SK-N-SH (cell line): ENCODE measurements at regions of chr7 and their contacts with region 1.

Region 1: GRCh38 chr7:36291387-36292316 is 98.0 kb upstream of the ANLN start:
- DNase-seq: peak; percentile 93
- H3K4me3 ChIP-seq: peak overlapping the region; percentile 18 to 37; a peak in 3 of 4 replicates
- H3K27ac ChIP-seq: peak overlapping the region in 1 of 2 experiments; percentile 1; a peak in 1 of 4 replicates
- H3K4me1 ChIP-seq: peaks cover 4 to 14% of the 10 kb centered on the region in 2 experiments; a peak in 1 of 4 replicates
- H3K27me3 ChIP-seq: no peaks in the 10 kb centered on the region
- CTCF ChIP-seq: peak; percentile 100
- EP300 ChIP-seq: no peak
- RAD21 ChIP-seq: peak; percentile 100

Region 2: GRCh38 chr7:35975851-35976454 is 315.7 kb before region 1 on chr7:
- CTCF ChIA-PET with region 1: interaction called, 12 read pairs
- POLR2A ChIA-PET with region 1: no interaction called
- DNase-seq: peak; percentile 72
- H3K4me3 ChIP-seq: no peak overlapping the region
- H3K27ac ChIP-seq: no peak overlapping the region
- H3K4me1 ChIP-seq: peaks cover 0 to 5% of the 10 kb centered on the region in 2 experiments; a peak in 1 of 4 replicates
- H3K27me3 ChIP-seq: no peaks in the 10 kb centered on the region
- CTCF ChIP-seq: peak; percentile 96
- EP300 ChIP-seq: no peak
- RAD21 ChIP-seq: peak; percentile 99

Region 3: GRCh38 chr7:35993676-35994606 is 297.7 kb before region 1 on chr7:
- CTCF ChIA-PET with region 1: interaction called, 24 read pairs
- POLR2A ChIA-PET with region 1: no interaction called
- DNase-seq: no peak
- H3K4me3 ChIP-seq: no peak overlapping the region
- H3K27ac ChIP-seq: no peak overlapping the region
- H3K4me1 ChIP-seq: no peaks in the 10 kb centered on the region
- H3K27me3 ChIP-seq: no peaks in the 10 kb centered on the region
- CTCF ChIP-seq: no peak
- EP300 ChIP-seq: no peak
- RAD21 ChIP-seq: no peak

Region 4: GRCh38 chr7:36119005-36119706 is 172.5 kb before region 1 on chr7:
- CTCF ChIA-PET with region 1: interaction called, 14 read pairs
- POLR2A ChIA-PET with region 1: no interaction called
- DNase-seq: no peak
- H3K4me3 ChIP-seq: no peak overlapping the region
- H3K27ac ChIP-seq: peak overlapping the region in 1 of 2 experiments; percentile 6; a peak in 1 of 4 replicates
- H3K4me1 ChIP-seq: peaks cover 27 to 30% of the 10 kb centered on the region in 2 experiments
- H3K27me3 ChIP-seq: no peaks in the 10 kb centered on the region
- CTCF ChIP-seq: no peak
- EP300 ChIP-seq: no peak; a peak in 1 of 4 replicates
- RAD21 ChIP-seq: no peak

Region 5: DNA sequence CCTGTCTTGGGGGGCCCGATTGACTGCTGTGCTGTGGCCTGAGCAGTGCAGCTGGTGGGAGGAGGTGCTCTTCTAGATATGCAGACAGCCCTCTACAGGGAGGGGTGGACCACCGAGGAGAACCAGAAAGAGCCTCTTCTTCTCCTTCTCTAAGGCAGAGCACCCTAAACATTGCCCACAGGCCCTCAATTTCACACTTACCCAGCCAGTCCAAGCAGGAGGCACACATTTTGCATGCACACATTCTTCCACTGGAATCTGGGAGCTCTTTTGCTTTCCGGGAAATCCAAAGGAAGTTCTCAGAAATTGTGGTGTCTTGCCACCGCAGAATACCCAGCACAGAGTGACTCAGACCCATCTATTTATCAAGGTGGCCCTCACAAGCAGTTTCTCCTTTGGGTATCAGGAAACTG is 92.8 kb before region 1 on chr7:
- CTCF ChIA-PET with region 1: interaction called, 10 read pairs
- POLR2A ChIA-PET with region 1: no interaction called
- DNase-seq: no peak
- H3K4me3 ChIP-seq: no peak overlapping the region
- H3K27ac ChIP-seq: no peak overlapping the region
- H3K4me1 ChIP-seq: peaks cover 0 to 22% of the 10 kb centered on the region in 2 experiments; a peak in 3 of 4 replicates
- H3K27me3 ChIP-seq: no peaks in the 10 kb centered on the region
- CTCF ChIP-seq: no peak
- EP300 ChIP-seq: no peak
- RAD21 ChIP-seq: no peak

Region 6: DNA sequence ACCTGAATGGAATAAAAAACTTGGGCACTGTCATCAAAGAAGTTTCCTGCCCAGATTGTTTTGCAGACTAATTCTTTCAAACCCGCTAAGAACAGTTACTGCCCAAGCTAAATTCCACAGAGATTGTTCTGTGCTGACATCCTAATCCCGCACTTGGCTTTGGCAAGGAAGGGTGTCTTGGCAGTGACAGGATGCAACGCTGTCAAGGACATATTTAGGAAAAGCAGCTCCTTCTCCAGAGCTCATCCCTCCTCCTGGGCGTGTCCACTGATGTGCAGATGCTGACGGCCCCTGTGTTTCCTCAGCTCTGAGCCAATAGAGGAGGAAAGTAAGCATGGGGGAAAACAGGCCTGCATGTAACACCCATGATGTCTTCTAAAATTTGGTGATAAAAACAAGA is 64.4 kb before region 1 on chr7:
- CTCF ChIA-PET with region 1: no interaction called
- POLR2A ChIA-PET with region 1: no interaction called
- DNase-seq: no peak
- H3K4me3 ChIP-seq: no peak overlapping the region
- H3K27ac ChIP-seq: no peak overlapping the region
- H3K4me1 ChIP-seq: peaks cover 0 to 24% of the 10 kb centered on the region in 2 experiments; a peak in 2 of 4 replicates
- H3K27me3 ChIP-seq: no peaks in the 10 kb centered on the region
- CTCF ChIP-seq: no peak
- EP300 ChIP-seq: no peak
- RAD21 ChIP-seq: no peak

Region 7: DNA sequence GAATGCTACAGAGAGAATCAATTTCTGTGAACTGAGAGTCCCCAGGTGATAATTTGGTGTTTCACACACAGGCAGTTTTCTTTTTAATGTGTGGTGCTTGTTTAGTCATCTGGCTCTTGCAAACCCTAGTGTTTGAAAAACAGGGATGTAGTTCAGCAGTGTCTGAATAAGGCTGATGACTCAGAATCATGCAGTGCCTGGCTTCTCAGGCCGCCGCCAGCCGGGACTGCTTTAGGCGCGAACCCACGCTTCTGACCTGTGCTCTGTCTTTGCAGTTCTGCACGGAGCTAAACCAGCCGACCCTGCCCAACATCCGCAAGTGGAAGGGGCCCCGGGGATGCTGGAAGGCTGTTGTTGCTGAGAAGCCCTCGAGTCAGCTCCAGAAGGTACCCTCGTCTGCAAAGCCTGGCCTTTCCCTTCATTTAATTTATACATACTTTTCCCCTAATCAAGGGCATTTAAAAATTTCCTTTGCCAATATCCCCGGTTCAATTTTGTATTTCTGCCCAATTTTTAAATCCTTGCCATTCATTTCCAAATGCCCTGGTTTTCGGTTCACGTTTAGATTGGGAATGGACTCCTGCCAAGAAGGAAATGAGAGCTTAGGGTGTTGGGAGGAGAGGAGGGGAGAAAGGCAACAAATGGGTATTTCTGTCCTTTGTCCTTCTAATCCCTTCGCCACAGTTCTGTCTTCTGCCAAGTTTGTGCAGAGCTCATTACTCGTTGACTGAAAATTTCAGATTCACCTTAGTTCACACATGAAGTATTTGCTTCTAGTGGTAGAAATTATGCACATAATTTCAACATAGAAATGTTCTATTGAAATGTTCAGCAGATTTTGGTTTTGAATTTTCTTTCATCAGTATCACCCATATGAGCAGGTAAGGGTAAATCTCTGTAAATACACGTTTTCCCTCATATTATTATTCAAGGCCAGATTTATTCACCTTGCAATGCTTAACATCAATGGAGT is 10.5 kb before region 1 on chr7:
- CTCF ChIA-PET with region 1: interaction called, 40 read pairs
- POLR2A ChIA-PET with region 1: no interaction called
- DNase-seq: peak; percentile 69
- H3K4me3 ChIP-seq: peak overlapping the region; percentile 28 to 39
- H3K27ac ChIP-seq: peak overlapping the region; percentile 63 to 74
- H3K4me1 ChIP-seq: peaks cover 32 to 54% of the 10 kb centered on the region in 2 experiments
- H3K27me3 ChIP-seq: no peaks in the 10 kb centered on the region
- CTCF ChIP-seq: no peak
- EP300 ChIP-seq: 0 out of 4 replicates have a peak, but pooled peaks of 1 of the 2 experiments have one; percentile 19
- RAD21 ChIP-seq: no peak; the same call in 1 of the 2 replicates

Region 8: GRCh38 chr7:36312344-36313334 is 21.0 kb after region 1 on chr7:
- CTCF ChIA-PET with region 1: interaction called, 216 read pairs
- POLR2A ChIA-PET with region 1: no interaction called
- DNase-seq: no peak
- H3K4me3 ChIP-seq: no peak overlapping the region
- H3K27ac ChIP-seq: no peak overlapping the region
- H3K4me1 ChIP-seq: peaks cover 0 to 10% of the 10 kb centered on the region in 2 experiments; a peak in 1 of 4 replicates
- H3K27me3 ChIP-seq: no peaks in the 10 kb centered on the region
- CTCF ChIP-seq: no peak
- EP300 ChIP-seq: no peak
- RAD21 ChIP-seq: no peak

Region 9: DNA sequence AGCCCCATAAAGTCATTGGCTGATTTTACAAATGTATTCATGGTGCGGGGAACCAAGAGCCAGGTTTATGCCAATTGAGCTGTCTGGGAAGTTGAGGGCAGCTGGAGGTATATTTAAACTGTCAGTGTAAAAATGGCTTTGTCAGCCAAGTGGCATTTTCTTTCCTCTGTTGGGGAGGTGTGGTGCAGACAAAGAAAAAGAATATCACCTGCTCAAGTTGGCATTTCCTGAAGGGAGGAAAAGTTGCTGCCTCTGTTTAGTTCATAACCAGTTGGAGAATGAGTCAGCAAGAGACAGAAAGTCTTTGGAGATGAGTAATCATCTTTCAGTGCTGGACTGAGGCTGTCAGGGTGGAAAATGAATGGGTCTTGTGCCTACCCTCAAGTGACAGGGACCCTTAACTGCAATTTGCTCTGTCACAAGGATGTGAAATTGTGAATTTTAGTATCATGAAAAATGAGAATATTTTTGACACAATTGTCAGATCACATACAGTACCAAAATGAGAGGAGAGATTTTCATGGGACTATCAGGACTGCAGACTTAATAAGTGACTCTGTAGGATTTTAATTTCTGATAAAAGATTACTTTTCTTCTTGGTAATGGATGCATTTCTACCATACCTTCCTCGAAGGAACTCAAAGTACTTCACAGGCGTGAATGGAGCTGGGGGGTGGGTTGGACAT is 235.4 kb after region 1 on chr7:
- CTCF ChIA-PET with region 1: no interaction called
- POLR2A ChIA-PET with region 1: no interaction called
- DNase-seq: no peak
- H3K4me3 ChIP-seq: no peak overlapping the region
- H3K27ac ChIP-seq: peak overlapping the region in 1 of 2 experiments; percentile 22; a peak in 2 of 4 replicates
- H3K4me1 ChIP-seq: peaks cover under 1 to 14% of the 10 kb centered on the region in 2 experiments; a peak in 3 of 4 replicates
- H3K27me3 ChIP-seq: no peaks in the 10 kb centered on the region
- CTCF ChIP-seq: no peak
- EP300 ChIP-seq: peak in 1 of 2 experiments; percentile 75; a peak in 1 of 4 replicates
- RAD21 ChIP-seq: no peak